ENCODE measurements at regions of chr12 and their contacts with region 1.

Region 1: DNA sequence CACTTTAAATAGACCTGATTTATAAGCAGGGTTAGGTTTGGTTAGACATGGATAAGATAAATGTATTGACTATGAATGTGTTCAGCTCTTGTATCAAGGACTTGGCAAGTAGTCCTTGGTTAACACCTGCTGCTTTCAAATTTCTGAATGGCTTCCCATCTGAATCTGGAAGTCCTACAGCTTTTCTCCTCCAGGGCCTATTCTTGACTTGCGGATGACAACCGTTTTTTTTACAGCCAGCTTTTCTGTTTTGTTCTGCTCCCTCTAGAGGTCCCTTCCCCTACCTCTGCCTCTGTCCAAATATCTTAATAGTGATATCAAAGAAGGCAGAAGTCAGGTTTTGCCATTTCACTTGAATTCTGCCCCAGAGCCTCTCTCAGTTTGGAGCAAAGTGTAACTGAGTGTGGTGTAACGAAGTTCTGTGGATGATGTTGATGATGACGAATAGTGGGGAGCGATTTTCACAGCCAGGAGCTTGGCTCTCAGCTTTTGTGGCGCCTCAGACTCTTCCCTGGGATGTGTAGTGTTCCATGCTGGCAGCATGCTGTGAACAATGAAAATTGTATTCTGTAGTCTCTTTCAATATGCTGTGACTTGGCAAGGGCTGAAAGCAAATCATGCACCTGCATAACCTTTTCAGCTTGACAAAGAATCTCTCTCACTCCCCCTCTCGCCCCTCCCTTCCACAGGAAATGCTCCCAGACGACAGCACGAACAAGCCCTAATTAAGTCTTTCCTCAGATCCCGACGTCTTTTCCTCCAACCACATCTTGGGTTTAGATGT is 5.0 kb upstream of the SLC4A8 start:
- DNase-seq: no peak
- CTCF ChIP-seq: no peak

Region 2: GRCh38 chr12:50894241-50894640 is 525.4 kb before region 1 on chr12:
- CTCF ChIA-PET with region 1: no interaction called
- POLR2A ChIA-PET with region 1: no interaction called
- DNase-seq: no peak
- CTCF ChIP-seq: no peak

Region 3: GRCh38 chr12:51281202-51281924 is 138.3 kb before region 1 on chr12:
- CTCF ChIA-PET with region 1: no interaction called
- POLR2A ChIA-PET with region 1: no interaction called
- DNase-seq: no peak
- CTCF ChIP-seq: no peak

Region 4: GRCh38 chr12:51403681-51404136 is 15.9 kb before region 1 on chr12:
- CTCF ChIA-PET with region 1: interaction called, 23 read pairs
- POLR2A ChIA-PET with region 1: no interaction called
- DNase-seq: no peak
- CTCF ChIP-seq: no peak

Region 5: DNA sequence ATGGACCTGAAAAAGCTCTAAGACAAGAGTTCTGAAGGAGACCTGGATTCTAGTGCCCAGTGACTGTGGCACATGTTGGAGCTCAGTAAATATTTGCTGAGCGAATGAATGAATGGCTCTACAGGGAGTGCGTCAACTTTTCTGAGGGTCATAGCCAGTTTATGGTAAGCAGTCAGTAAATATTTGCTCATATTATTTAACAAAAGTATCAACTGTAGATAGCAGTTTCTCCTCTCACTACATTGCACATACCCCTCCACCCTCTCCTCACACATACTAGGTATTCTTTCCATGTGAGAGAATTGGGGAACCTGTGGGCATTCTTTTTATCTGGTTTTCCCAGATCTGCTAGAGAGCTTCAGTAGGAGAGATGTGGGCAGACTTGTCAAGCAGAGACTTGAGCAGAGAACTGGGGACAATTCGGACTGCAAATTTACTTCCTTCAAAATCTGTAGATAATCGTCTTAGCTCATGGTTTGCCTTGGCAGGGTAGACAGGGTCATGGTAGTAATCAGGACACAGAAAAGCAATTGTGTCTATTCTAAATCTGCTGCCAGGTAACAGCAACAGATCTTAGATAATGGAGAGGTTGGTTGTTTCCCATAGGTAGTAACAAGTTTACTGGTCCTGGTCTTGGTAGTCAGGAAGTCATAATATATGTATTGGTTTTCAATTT is 10.8 kb after region 1 on chr12:
- CTCF ChIA-PET with region 1: interaction called, 29 read pairs
- POLR2A ChIA-PET with region 1: no interaction called
- DNase-seq: no peak
- CTCF ChIP-seq: no peak

Region 6: DNA sequence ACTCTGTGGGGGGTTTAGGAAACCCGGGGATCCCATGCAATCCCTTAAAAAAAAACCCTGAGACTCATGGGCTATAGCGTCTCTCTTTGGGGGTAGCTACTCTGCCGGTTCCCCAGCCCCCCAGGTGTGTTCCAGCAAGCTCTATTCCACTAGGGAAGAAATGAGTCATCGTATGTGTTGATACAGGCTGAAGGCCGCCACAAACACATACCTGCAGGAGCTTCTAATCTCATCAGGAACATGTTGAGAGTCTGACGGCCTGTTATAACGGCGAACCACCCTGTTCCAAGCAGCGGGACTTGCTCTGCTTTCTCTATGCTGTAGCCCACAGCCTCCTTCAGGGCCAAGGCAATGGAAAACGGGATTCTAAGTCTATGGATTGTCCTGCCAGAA is 1101.6 kb after region 1 on chr12:
- CTCF ChIA-PET with region 1: no interaction called
- POLR2A ChIA-PET with region 1: no interaction called
- DNase-seq: no peak
- CTCF ChIP-seq: no peak

Measured in GM10248 (cell line).